ENCODE measurements at regions of chr15 and their contacts with region 1.

Region 1: DNA sequence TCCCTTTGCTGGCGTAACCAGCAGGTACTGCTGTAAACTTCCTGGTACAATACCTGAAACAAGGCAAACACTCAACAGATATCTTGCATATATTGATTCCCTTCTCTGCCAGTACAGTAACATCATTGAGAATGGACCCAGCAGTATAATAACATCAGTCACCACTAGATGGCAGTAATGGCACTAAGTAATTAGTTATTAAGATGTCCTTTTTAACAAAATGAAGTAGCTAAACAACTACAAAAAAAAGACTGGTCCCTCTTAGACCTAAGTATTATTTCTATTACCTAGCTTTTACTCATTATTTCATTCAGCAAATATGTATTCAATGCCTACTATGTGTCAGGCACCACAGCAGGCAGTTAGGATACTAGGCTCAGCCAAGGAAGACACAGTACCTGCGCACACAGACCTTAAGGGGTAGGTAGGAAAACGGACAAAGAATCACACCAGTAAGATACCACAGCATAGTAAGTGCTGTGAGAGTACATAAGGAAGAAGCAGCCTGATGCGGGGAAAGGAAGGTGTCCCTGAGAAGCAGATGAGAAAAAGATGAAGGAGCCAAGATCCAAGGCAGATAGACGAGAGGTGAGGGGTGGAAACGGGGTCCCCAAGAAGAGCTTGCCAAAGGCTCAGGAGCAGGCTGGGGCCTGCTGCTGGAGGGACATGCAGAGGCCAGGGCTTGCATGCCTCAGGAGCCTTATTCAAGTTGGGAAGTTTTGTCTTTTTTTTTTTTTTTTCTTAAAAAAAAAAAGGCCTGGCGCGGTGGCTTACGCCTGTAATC is 102.8 kb upstream of the CHD2 start:
- DNase-seq: peak; percentile 40
- ATAC-seq: peak; percentile 93
- H3K4me3 ChIP-seq: no peak overlapping the region
- H3K27ac ChIP-seq: no peak overlapping the region
- H3K4me1 ChIP-seq: no peaks in the 10 kb centered on the region
- H3K27me3 ChIP-seq: no peaks in the 10 kb centered on the region; a peak in 1 of 4 replicates
- CTCF ChIP-seq: peak; percentile 51 to 69 (median 65); a peak in 5 of 6 replicates
- EP300 ChIP-seq: no peak
- POLR2A ChIP-seq: no peak
- RAD21 ChIP-seq: peak; percentile 64

Region 2: GRCh38 chr15:92709110-92709790 is 88.1 kb before region 1 on chr15:
- CTCF ChIA-PET with region 1: no interaction called
- POLR2A ChIA-PET with region 1: no interaction called
- RAD21 ChIA-PET with region 1: no interaction called
- SMC1A ChIA-PET with region 1: no interaction called
- in situ Hi-C with region 1: no loop called
- intact Hi-C with region 1: no loop called
- DNase-seq: no peak
- ATAC-seq: no peak
- H3K4me3 ChIP-seq: no peak overlapping the region
- H3K27ac ChIP-seq: no peak overlapping the region
- H3K4me1 ChIP-seq: no peaks in the 10 kb centered on the region
- H3K27me3 ChIP-seq: peaks cover 0 to 3% of the 10 kb centered on the region in 2 experiments; a peak in 1 of 4 replicates
- CTCF ChIP-seq: no peak
- EP300 ChIP-seq: no peak
- POLR2A ChIP-seq: no peak
- RAD21 ChIP-seq: no peak

Region 3: GRCh38 chr15:92808978-92809879 is 11.9 kb after region 1 on chr15:
- CTCF ChIA-PET with region 1: interaction called, 24 read pairs
- POLR2A ChIA-PET with region 1: interaction called, 4 read pairs
- RAD21 ChIA-PET with region 1: interaction called, 23 read pairs
- SMC1A ChIA-PET with region 1: interaction called, 14 read pairs
- in situ Hi-C with region 1: no loop called
- intact Hi-C with region 1: no loop called
- DNase-seq: peak; percentile 94
- ATAC-seq: peak; percentile 87
- H3K4me3 ChIP-seq: peak overlapping the region; percentile 79
- H3K27ac ChIP-seq: peak overlapping the region; percentile 100
- H3K4me1 ChIP-seq: peaks cover 2% of the 10 kb centered on the region
- H3K27me3 ChIP-seq: no peaks in the 10 kb centered on the region
- CTCF ChIP-seq: peak; percentile 75 to 99 (median 90); a peak in 5 of 6 replicates
- EP300 ChIP-seq: peak in 1 of 2 experiments; percentile 52; a peak in 2 of 4 replicates
- POLR2A ChIP-seq: peak; percentile 92
- RAD21 ChIP-seq: peak; percentile 61

Region 4: GRCh38 chr15:92917606-92918407 is 120.4 kb after region 1 on chr15:
- CTCF ChIA-PET with region 1: interaction called, 126 read pairs
- POLR2A ChIA-PET with region 1: interaction called, 4 read pairs
- RAD21 ChIA-PET with region 1: interaction called, 25 read pairs
- SMC1A ChIA-PET with region 1: interaction called, 41 read pairs
- in situ Hi-C with region 1: no loop called
- intact Hi-C with region 1: loop called (anchors 1 kb)
- DNase-seq: peak; percentile 80
- ATAC-seq: peak; percentile 52
- H3K4me3 ChIP-seq: no peak overlapping the region
- H3K27ac ChIP-seq: peak overlapping the region; percentile 29; the same call in 1 of the 2 replicates
- H3K4me1 ChIP-seq: peaks cover 41% of the 10 kb centered on the region
- H3K27me3 ChIP-seq: no peaks in the 10 kb centered on the region
- CTCF ChIP-seq: peak; percentile 71 to 86 (median 84)
- EP300 ChIP-seq: 0 out of 4 replicates have a peak, but pooled peaks of 1 of the 2 experiments have one; percentile 12
- POLR2A ChIP-seq: no peak
- RAD21 ChIP-seq: peak; percentile 80

Region 5: GRCh38 chr15:92944946-92945521 is 147.7 kb after region 1 on chr15:
- CTCF ChIA-PET with region 1: interaction called, 14 read pairs
- POLR2A ChIA-PET with region 1: no interaction called
- RAD21 ChIA-PET with region 1: interaction called, 3 read pairs
- SMC1A ChIA-PET with region 1: interaction called, 9 read pairs
- in situ Hi-C with region 1: no loop called
- intact Hi-C with region 1: no loop called
- DNase-seq: no peak
- ATAC-seq: no peak
- H3K4me3 ChIP-seq: no peak overlapping the region
- H3K27ac ChIP-seq: no peak overlapping the region
- H3K4me1 ChIP-seq: no peaks in the 10 kb centered on the region
- H3K27me3 ChIP-seq: no peaks in the 10 kb centered on the region
- CTCF ChIP-seq: no peak
- EP300 ChIP-seq: no peak
- POLR2A ChIP-seq: no peak; the same call in 1 of the 2 replicates
- RAD21 ChIP-seq: no peak

Region 6: GRCh38 chr15:92979011-92979701 is 181.8 kb after region 1 on chr15:
- CTCF ChIA-PET with region 1: interaction called, 13 read pairs
- POLR2A ChIA-PET with region 1: interaction called, 6 read pairs
- RAD21 ChIA-PET with region 1: interaction called, 7 read pairs
- SMC1A ChIA-PET with region 1: interaction called, 7 read pairs
- in situ Hi-C with region 1: no loop called
- intact Hi-C with region 1: no loop called
- DNase-seq: peak; percentile 9
- ATAC-seq: peak; percentile 54
- H3K4me3 ChIP-seq: no peak overlapping the region
- H3K27ac ChIP-seq: no peak overlapping the region
- H3K4me1 ChIP-seq: no peaks in the 10 kb centered on the region
- H3K27me3 ChIP-seq: no peaks in the 10 kb centered on the region
- CTCF ChIP-seq: no peak
- EP300 ChIP-seq: no peak
- POLR2A ChIP-seq: no peak
- RAD21 ChIP-seq: no peak

Region 7: DNA sequence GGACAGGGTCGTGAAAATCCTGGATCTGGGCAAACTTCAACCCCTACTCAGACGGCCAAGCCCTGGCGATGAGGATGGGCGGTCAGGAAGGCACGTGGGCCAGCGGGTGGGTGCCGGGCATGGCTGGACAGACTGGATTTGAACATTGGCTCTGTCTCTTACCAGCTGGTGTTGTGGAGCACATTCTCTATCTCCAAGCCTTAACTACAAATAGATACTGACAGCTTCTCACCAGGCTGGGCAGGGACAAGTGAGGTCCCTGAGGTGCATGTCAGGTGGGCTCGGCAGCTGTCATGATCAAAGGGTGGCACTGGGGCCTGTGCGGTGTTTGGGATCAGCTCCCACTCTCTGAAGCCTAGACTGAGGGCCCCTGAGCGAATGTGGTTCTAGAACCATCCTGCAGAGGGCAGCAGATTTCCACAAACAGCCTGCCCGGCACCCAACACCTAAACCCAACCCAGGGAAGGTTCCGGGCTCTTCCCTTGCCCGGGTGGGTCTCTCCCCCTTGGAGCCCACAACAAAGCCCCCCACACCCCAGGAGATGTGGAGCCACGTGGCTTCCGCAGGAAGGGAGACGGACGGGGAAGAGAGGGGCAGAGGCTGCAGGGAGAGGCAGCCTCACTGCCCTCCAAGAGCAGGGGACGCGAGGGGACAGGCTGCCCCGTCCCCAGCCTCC is 233.2 kb after region 1 on chr15:
- CTCF ChIA-PET with region 1: interaction called, 39 read pairs
- POLR2A ChIA-PET with region 1: no interaction called
- RAD21 ChIA-PET with region 1: interaction called, 29 read pairs
- SMC1A ChIA-PET with region 1: interaction called, 13 read pairs
- in situ Hi-C with region 1: loop called (anchors 5 kb)
- intact Hi-C with region 1: loop called (anchors 10 kb)
- DNase-seq: peak; percentile 7
- ATAC-seq: peak; percentile 93
- H3K4me3 ChIP-seq: no peak overlapping the region
- H3K27ac ChIP-seq: no peak overlapping the region
- H3K4me1 ChIP-seq: no peaks in the 10 kb centered on the region
- H3K27me3 ChIP-seq: no peaks in the 10 kb centered on the region
- CTCF ChIP-seq: peak; percentile 80 to 88 (median 85); a peak in 5 of 6 replicates
- EP300 ChIP-seq: no peak
- POLR2A ChIP-seq: no peak
- RAD21 ChIP-seq: peak; percentile 78